Dorsolateral prefrontal cortex (tissue), 120 donors: ENCODE measurements at regions of chr10 and their contacts with region 1.

Region 1: DNA sequence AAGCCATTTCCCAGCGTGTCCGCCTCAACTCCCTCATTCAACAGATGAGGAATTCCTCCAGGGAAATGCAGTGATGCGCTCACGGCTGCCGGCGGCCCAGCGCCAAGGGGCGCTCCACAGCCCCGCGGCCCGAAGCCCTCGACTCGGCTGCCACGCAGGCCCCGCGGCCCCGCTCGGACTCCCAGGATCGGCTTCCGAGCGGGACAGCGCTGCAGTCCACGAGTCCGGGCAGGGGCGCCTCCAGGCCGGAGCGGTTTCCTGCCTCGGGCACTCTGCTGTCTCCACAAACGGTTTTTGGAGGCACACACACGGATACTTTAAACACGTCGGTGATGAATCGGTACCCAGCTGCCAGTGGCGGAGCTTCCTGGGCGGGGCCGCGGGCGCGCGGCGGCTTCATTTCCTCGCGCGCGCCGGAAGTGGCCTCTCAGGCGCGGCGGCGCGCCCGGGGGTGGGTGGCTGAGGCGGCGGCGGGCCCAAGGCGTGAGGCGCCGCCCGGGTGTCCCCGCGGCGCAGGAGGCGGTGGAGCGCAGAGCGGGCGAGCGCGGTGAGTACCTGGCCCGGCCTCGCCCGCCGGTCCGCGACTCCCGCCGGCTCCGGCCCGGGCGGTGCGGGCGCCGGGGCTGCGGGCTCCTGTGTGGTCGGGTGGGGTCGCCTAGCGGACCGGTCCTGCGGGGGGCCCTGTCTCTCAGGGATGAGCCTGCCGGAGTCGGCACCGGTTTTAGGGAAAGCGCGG is at the start of gene CSGALNACT2:
- DNase-seq: peak; percentile 74 to 92 (median 78)
- H3K4me3 ChIP-seq: peak within 1 kb of the TSS; percentile 63 to 99 (median 89)
- H3K27ac ChIP-seq: peak within 1 kb of the TSS; percentile 60 to 99 (median 96)
- H3K27me3 ChIP-seq: no peaks in the 10 kb centered on the region
- CTCF ChIP-seq: peak in 13 of 56 donors; percentile 2 to 27 (median 15)
- total RNA-seq, gene CSGALNACT2: 18.7 to 36.1 (median 23.8) TPM

Region 2: GRCh38 chr10:43190775-43191174 is 52.6 kb after region 1 on chr10:
- intact Hi-C with region 1: loop called in 1 of 2 experiments (anchors 5 kb)
- DNase-seq: no peak
- H3K4me3 ChIP-seq: peak overlapping the region in 12 of 59 donors; percentile 1 to 18 (median 9)
- H3K27ac ChIP-seq: peak overlapping the region in 45 of 59 donors; percentile 0 to 86 (median 55)
- H3K27me3 ChIP-seq: no peaks in the 10 kb centered on the region
- CTCF ChIP-seq: no peak

Region 3: DNA sequence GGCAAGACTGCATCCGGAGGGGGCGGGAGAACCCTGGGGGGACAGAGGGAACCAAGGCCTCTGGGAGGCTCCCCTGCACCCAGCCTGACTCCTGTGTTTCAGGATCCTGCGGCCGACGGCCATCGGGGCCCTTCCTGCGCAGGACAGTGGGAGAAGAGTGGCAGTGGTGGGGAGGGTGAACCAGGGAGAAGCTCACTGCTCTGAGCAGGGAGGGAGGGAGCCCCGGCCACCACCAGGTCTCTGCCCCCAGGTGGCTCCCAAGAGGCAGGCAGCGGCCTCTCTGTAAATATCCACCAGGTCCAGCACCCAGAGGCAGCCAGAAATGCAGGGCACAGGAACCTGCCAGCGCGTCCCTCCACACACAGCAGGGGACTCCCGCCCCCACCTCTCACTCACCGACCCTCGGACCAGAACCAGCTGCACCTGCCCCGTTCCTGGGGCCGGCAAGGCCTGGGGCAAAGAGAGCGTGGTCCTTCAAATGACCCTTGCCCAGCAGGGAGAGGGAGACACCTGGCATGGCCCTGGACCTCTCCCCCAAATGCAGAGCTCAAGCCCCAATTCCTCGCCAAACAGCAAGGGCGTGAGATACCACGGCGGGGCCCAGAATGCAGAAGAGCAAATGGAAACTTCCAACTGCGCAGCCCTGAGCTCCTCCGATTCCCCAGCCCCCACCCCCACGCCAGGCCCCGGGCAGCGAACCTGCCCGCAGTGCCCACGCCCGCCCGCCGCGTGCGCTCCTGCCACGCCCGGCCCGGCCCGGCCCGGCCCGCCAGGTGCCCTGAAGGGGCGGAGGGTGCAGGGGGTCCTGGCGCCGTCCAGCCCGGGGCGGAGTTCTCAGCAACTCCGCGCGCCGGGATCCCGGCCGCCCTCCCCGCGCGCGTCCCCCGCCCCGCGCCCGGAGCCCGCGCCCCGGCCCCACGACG is 127.9 kb after region 1 on chr10:
- intact Hi-C with region 1: loop called in 1 of 2 experiments (anchors 2 kb)
- DNase-seq: peak in 5 of 10 donors; percentile 30 to 53 (median 44)
- H3K4me3 ChIP-seq: peak overlapping the region in 58 of 59 donors; percentile 24 to 68 (median 57)
- H3K27ac ChIP-seq: peak overlapping the region in 55 of 59 donors; percentile 26 to 89 (median 75)
- H3K27me3 ChIP-seq: peaks cover 0 to 40% (median 9%) of the 10 kb centered on the region in 45 donors
- CTCF ChIP-seq: peak in 7 of 56 donors; percentile 8 to 23 (median 17)